Lower leg skin (tissue), 4 donors: ENCODE measurements at regions of chr4 and their contacts with region 1.

Region 1: GRCh38 chr4:91914176-91914804 is 389.5 kb upstream of the GRID2 start:
- DNase-seq: no peak
- H3K4me3 ChIP-seq: no peak overlapping the region
- CTCF ChIP-seq: no peak
- POLR2A ChIP-seq: no peak

Region 2: GRCh38 chr4:92091335-92091734 is 177.0 kb after region 1 on chr4:
- intact Hi-C with region 1: no loop called
- DNase-seq: no peak
- H3K4me3 ChIP-seq: no peak overlapping the region
- CTCF ChIP-seq: no peak
- POLR2A ChIP-seq: no peak

Region 3: DNA sequence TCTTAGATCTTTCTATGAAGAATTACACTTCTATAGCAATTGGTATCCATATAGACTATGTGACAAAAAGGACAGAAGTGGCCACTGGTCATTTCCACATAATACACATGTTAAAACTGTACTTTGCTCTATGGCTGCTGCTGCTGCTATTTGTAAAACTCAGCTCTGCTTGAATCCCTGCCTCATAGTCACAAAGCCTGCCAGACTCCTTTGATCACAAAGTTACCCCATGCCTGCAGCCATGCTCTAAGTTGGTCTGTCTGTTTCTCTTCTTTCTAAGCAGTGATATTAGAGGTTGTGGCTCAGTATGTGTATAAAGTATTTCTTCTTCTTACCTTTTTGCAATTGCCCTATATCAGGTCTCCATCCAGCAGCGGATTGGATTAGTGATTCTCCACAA is 600.3 kb after region 1 on chr4:
- intact Hi-C with region 1: no loop called
- DNase-seq: no peak
- H3K4me3 ChIP-seq: no peak overlapping the region
- CTCF ChIP-seq: no peak
- POLR2A ChIP-seq: no peak

Region 4: GRCh38 chr4:92760433-92760832 is 846.1 kb after region 1 on chr4:
- intact Hi-C with region 1: loop called (anchors 5 kb)
- DNase-seq: no peak
- H3K4me3 ChIP-seq: no peak overlapping the region
- CTCF ChIP-seq: no peak
- POLR2A ChIP-seq: no peak